ENCODE measurements at regions of chr12 and their contacts with region 1.

Region 1: DNA sequence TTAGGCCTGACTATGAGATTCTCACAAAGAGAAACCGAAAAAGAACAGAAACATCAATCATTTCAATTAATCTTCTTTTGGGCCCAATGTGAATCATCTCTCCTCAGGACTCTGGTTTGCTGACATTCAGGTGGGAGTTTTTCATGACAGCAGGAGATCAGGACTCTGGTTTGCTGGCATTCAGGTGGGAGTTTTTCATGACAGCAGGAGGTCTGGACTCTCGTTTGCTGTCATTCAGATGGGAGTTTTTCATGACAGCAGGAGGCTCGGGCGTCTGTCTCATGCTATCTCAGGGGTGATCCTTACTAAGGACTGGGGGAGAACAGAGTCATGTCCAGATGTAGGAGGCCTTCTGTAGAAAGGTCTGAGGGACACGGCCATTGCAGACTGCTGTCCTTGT is 40.1 kb upstream of the PARP11 start:
- DNase-seq: no peak
- H3K4me3 ChIP-seq: no peak overlapping the region
- CTCF ChIP-seq: no peak

Region 2: DNA sequence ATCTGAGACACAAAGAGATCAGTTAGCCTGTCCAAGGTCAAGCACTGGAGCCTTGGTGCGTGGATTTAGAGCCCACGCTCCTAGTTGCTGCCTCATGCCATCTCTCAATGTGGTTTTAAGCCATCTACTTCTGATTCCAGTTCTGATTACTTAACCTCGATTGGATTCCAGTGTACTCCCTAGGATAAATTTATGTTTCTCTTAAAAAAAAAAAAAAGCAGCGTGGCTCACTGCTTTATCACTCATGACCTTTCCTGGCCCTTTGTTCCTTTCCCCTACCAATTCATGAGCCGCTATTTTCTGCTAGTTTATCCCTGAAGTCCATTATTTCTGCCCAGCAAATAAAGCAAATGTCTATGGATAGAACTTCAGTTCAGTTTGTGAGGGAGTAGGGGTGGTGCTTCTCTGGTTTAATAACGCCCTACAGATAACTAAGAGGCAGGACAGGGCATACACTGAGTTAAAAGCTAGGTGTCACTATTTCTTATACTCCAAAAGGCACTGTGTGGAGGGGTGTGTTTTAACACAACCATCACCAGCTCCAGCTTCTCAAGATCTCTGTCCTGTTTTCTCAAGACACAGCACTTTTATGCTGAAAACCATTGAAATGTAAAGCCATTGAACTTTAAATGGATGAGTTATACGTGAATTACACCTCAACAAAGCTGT is 30.2 kb before region 1 on chr12:
- in situ Hi-C with region 1: no loop called
- DNase-seq: no peak
- H3K4me3 ChIP-seq: no peak overlapping the region
- CTCF ChIP-seq: peak; percentile 26

Region 3: GRCh38 chr12:3959799-3960560 is 46.7 kb after region 1 on chr12:
- in situ Hi-C with region 1: loop called (anchors 5 kb)
- DNase-seq: no peak
- H3K4me3 ChIP-seq: no peak overlapping the region
- CTCF ChIP-seq: no peak